ENCODE measurements at regions of chr6 and their contacts with region 1.

Region 1: GRCh38 chr6:109867009-109867969 is 110.8 kb upstream of the GPR6 start:
- DNase-seq: no peak
- ATAC-seq: peak; percentile 48; the same call in 1 of the 2 replicates
- H3K4me3 ChIP-seq: no peak overlapping the region
- H3K27ac ChIP-seq: no peak overlapping the region
- H3K4me1 ChIP-seq: no peaks in the 10 kb centered on the region
- H3K27me3 ChIP-seq: peaks cover 4% of the 10 kb centered on the region
- CTCF ChIP-seq: no peak

Region 2: GRCh38 chr6:109705258-109705657 is 162.0 kb before region 1 on chr6:
- CTCF ChIA-PET with region 1: no interaction called
- POLR2A ChIA-PET with region 1: no interaction called
- in situ Hi-C with region 1: no loop called
- intact Hi-C with region 1: loop called (anchors 10 kb)
- DNase-seq: peak; percentile 90
- ATAC-seq: peak; percentile 97
- H3K4me3 ChIP-seq: no peak overlapping the region
- H3K27ac ChIP-seq: no peak overlapping the region
- H3K4me1 ChIP-seq: no peaks in the 10 kb centered on the region
- H3K27me3 ChIP-seq: no peaks in the 10 kb centered on the region
- CTCF ChIP-seq: peak; percentile 100

Region 3: GRCh38 chr6:110939429-110940200 is 1072.3 kb after region 1 on chr6:
- CTCF ChIA-PET with region 1: interaction called, 11 read pairs
- POLR2A ChIA-PET with region 1: no interaction called
- in situ Hi-C with region 1: no loop called
- intact Hi-C with region 1: no loop called
- DNase-seq: no peak
- ATAC-seq: no peak
- H3K4me3 ChIP-seq: no peak overlapping the region
- H3K27ac ChIP-seq: no peak overlapping the region
- H3K4me1 ChIP-seq: no peaks in the 10 kb centered on the region
- H3K27me3 ChIP-seq: no peaks in the 10 kb centered on the region
- CTCF ChIP-seq: no peak

Region 4: DNA sequence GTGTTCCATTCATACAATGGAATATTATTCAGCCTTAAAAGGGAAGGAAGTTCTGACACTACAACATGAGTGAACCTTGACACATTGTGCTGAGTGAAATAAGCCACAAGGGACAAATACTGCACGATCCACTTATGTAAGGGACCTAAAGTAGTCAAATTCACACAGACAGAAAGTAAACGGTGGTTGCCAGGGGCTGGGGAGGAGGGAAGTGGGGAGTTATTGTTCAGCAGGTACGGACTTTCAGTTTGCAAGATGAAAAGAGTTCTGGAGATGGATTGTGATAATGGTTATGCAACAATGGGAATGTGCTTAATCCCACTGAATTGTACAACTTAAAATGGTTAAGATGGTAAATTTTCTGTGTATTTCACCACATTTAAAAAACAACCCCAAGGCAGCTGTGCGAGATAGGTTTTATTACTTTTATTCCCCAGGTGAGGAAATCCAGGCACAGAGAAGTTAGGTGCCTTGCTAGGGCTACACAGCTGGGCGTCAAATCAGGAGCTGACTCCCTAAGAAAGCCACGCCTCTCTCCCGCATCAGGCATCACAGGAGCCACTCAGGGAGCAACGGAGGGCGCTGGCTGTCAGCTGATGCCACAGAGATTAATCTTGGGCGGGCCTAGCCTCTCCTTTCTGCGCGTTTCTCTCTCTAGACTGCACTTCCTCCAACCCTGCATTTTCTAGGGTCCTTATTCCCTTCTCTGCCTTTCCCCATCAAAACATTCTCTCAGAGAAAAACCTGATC is 1747.7 kb after region 1 on chr6:
- CTCF ChIA-PET with region 1: no interaction called
- POLR2A ChIA-PET with region 1: no interaction called
- in situ Hi-C with region 1: no loop called
- intact Hi-C with region 1: no loop called
- DNase-seq: no peak
- ATAC-seq: peak; percentile 57; the same call in 1 of the 2 replicates
- H3K4me3 ChIP-seq: peak overlapping the region in 1 of 2 experiments; percentile 9; a peak in 1 of 4 replicates
- H3K27ac ChIP-seq: no peak overlapping the region
- H3K4me1 ChIP-seq: peaks cover 8% of the 10 kb centered on the region
- H3K27me3 ChIP-seq: no peaks in the 10 kb centered on the region
- CTCF ChIP-seq: no peak

Measured in Panc1 (cell line).